Calu3 (cell line): ENCODE measurements at regions of chr3 and their contacts with region 1.

Region 1: GRCh38 chr3:170414202-170414663 is 4.4 kb upstream of the CLDN11 start:
- DNase-seq: peak; percentile 55
- H3K4me3 Mint-ChIP-seq: no peak overlapping the region
- H3K27ac Mint-ChIP-seq: no peak overlapping the region
- H3K4me1 Mint-ChIP-seq: peaks cover 8% of the 10 kb centered on the region
- H3K27me3 Mint-ChIP-seq: no peaks in the 10 kb centered on the region
- CTCF ChIP-seq: peak; percentile 97

Region 2: DNA sequence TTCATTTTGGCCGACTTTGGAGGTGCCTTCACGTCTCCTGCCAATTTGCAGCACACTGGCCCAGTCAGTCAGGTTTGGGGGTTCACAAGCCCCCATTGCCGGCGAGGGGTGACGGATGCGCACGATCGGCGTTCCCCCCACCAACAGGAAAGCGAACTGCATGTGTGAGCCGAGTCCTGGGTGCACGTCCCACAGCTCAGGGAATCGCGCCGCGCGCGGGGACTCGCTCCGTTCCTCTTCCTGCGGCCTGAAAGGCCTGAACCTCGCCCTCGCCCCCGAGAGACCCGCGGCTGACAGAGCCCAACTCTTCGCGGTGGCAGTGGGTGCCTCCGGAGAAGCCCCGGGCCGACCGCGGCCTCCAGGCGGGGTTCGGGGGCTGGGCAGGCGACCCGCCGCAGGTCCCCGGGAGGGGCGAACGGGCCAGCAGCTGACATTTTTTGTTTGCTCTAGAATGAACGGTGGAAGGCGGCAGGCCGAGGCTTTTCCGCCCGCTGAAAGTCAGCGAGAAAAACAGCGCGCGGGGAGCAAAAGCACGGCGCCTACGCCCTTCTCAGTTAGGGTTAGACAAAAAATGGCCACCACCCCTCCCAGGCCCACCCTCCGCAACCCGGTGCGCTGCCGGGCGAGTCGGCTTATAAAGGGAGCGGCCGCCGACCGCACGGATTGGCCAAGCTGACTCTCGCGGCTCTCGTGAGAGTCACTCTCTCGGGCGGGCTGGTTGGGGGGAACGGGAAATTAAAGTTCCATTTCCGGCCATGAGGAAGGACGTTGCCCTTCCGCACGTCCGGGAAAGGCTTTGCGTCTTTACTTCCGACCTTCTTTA is 649.6 kb before region 1 on chr3 and contains the start of gene TERC:
- CTCF ChIA-PET with region 1: no interaction called
- intact Hi-C with region 1: loop called (anchors 10 kb)
- DNase-seq: peak; percentile 89
- H3K4me3 Mint-ChIP-seq: peak within 1 kb of the TSS; percentile 91
- H3K27ac Mint-ChIP-seq: peak within 1 kb of the TSS; percentile 79
- H3K4me1 Mint-ChIP-seq: peaks cover 11% of the 10 kb centered on the region
- H3K27me3 Mint-ChIP-seq: no peaks in the 10 kb centered on the region
- CTCF ChIP-seq: no peak
- total RNA-seq, gene TERC: 4.7 and 11.0 TPM in 2 replicates

Region 3: GRCh38 chr3:170207717-170208116 is 206.5 kb before region 1 on chr3:
- CTCF ChIA-PET with region 1: no interaction called
- intact Hi-C with region 1: no loop called
- DNase-seq: no peak
- H3K4me3 Mint-ChIP-seq: no peak overlapping the region
- H3K27ac Mint-ChIP-seq: no peak overlapping the region
- H3K4me1 Mint-ChIP-seq: peaks cover 13% of the 10 kb centered on the region
- H3K27me3 Mint-ChIP-seq: no peaks in the 10 kb centered on the region
- CTCF ChIP-seq: no peak

Region 4: DNA sequence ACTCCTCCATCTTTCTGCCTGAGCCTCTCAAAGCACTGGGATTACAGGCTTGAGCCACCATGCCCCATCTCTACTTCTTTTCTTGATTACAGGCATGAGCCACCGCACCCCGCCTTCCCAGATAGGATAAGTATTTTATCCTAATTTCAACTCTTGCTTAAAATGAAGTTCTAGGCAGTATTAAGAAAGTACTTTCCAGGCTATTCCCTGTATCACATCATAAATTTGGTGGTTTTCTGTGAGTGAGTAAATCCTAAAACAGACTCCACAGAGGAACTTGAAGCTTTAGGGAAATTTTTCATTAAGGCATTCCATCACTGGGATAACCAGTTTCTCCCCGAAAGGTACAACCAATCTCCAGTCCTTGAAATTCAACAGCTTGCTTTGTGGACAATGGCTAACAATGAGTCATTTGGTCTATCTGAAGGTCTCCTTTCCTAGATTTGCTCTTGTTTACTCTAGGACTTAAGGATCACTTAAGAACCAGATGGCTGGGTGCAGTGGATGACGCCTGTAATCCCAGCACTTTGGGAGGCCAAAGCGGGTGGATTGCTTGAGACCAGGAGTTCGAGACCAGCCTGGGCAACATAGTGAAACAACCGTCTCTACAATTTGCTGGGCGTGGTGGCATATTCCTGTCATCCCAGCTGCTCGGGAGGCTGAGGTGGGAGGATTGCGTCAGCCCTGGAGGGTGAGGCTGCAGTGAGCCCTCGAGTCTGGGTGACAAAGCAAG is 106.4 kb before region 1 on chr3:
- CTCF ChIA-PET with region 1: interaction called, 12 read pairs
- intact Hi-C with region 1: loop called (anchors 1 kb)
- DNase-seq: peak; percentile 62
- H3K4me3 Mint-ChIP-seq: peak overlapping the region; percentile 52
- H3K27ac Mint-ChIP-seq: peak overlapping the region; percentile 96
- H3K4me1 Mint-ChIP-seq: peaks cover 16% of the 10 kb centered on the region
- H3K27me3 Mint-ChIP-seq: no peaks in the 10 kb centered on the region
- CTCF ChIP-seq: no peak

Region 5: DNA sequence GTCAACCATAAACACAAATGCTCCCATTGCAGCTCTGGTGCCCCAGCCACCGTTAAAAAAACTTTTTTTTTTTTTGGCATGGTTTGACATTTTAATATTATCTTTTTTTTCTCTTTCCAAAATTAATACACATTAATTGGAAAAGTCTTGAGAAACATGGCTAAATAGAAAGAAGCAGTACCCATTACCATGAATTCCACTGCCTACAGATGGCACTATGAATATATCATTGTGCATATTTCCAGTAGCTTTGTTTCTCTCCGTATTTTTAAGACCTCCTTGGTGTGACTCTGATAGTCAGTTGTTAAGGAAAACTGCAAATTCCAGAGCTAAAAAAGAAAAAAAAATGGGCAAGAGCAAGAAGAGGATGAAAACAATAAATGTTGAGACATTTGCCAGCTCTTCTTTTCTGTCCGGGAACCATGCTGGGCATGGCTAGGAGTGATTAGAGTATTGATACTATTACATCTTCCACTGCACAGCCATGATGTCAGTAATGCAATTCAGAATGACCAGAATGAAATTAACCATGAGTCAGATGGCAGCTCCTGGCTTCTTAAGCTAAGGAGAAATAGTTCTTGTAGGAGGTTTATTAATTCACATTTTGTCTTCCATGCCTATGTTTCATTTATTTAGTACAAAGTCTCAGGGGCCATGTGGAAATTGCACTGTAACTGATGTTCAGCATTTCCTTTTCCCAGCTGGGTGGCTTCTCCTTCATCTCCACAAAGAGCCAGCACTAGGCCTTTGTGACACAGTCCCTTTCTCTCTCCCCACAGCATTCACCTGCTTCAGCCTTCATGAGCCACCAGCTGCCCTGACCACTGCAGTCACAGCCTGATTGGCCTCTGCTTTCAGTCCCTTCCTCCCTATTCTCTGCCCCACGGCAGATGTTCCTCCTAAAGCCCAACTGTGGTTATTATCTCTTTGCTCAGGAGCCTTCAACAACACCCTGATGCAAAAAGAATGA is 139.8 kb after region 1 on chr3:
- CTCF ChIA-PET with region 1: interaction called, 3 read pairs
- intact Hi-C with region 1: loop called (anchors 5 kb)
- DNase-seq: no peak
- H3K4me3 Mint-ChIP-seq: no peak overlapping the region
- H3K27ac Mint-ChIP-seq: no peak overlapping the region
- H3K4me1 Mint-ChIP-seq: no peaks in the 10 kb centered on the region
- H3K27me3 Mint-ChIP-seq: peaks cover 31% of the 10 kb centered on the region
- CTCF ChIP-seq: no peak

Region 6: GRCh38 chr3:170848292-170848917 is 434.2 kb after region 1 on chr3:
- CTCF ChIA-PET with region 1: interaction called, 14 read pairs
- intact Hi-C with region 1: loop called (anchors 1 kb)
- DNase-seq: no peak
- H3K4me3 Mint-ChIP-seq: no peak overlapping the region
- H3K27ac Mint-ChIP-seq: no peak overlapping the region
- H3K4me1 Mint-ChIP-seq: no peaks in the 10 kb centered on the region
- H3K27me3 Mint-ChIP-seq: no peaks in the 10 kb centered on the region
- CTCF ChIP-seq: peak; percentile 53